Spleen (tissue), 13 donors: ENCODE measurements at regions of chr13 and their contacts with region 1.

Region 1: GRCh38 chr13:29771247-29771646 is 79.2 kb downstream of the UBL3 start:
- DNase-seq: no peak
- H3K4me3 ChIP-seq: no peak overlapping the region
- H3K27ac ChIP-seq: no peak overlapping the region
- H3K4me1 ChIP-seq: peaks cover 0 to 17% (median 0%) of the 10 kb centered on the region in 6 donors
- H3K27me3 ChIP-seq: no peaks in the 10 kb centered on the region
- CTCF ChIP-seq: peak in 10 of 11 experiments; percentile 26 to 68 (median 57)
- POLR2A ChIP-seq: no peak

Region 2: DNA sequence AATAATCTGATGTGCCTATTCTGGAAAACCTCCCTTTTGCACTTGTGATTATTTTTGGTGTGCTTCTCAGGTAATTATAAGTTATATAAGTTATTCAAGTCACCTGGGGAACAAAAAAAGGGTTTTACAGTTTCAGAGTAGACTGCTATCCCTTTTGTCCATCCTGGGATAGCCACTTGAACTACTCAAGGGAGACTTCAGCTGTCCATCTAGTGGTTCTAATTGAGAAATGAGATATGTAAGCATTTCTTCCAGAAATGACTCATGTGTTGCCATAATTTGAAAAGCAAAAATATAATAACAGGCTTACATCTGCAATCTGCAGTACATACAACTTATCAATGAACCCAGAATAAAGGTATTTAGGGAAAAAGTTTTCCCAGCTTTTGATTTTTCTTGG is 58.8 kb after region 1 on chr13:
- intact Hi-C with region 1: no loop called
- DNase-seq: no peak
- H3K4me3 ChIP-seq: no peak overlapping the region
- H3K27ac ChIP-seq: no peak overlapping the region
- H3K4me1 ChIP-seq: peaks cover 0 to 10% (median 2%) of the 10 kb centered on the region in 6 donors
- H3K27me3 ChIP-seq: no peaks in the 10 kb centered on the region
- CTCF ChIP-seq: no peak
- POLR2A ChIP-seq: no peak

Region 3: DNA sequence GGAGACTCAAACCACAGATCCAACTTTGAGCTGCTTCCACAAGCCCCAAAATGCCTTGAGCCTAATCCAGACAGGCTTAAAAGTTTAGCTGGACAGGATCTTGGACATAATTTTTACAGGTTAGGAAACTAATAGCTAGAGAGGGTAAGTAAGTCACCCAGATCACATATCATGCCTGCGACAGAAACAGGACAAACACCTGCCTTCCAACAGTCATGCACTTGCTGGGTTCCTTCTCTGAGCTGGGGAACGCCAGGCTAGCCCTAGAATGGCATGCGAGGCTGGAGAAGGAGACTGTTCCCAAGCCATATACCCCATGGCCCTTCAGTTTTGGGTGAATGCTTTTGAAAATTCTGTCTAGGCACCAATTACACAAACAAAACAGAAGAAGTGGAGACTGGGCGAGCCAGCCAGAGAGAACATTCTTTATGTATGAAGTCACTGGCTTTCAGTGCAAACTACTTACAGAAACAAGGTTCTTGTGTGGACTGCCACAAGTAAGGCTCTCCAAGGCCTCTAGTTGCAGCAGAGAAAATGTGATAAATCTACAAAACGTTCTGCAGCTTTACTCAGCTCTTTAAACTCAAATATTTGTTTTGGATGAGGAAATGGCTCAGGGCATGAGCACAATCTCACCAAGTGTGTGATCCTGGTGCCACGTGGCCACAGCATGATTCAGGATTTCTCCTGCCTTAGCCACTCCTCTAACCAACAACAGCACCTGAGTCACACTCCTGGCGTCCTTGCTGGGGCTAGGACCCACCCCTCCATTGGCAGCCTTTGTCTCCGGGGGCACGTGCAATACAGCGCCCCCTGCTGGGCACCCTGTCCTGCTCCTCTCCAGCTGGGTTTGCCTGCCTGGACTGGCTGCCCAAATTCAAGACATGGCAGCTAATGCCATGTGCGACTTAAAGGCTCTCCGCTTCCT is 152.6 kb after region 1 on chr13:
- intact Hi-C with region 1: loop called (anchors 10 kb)
- DNase-seq: peak; percentile 84
- H3K4me3 ChIP-seq: no peak overlapping the region
- H3K27ac ChIP-seq: peak overlapping the region in 4 of 8 donors; percentile 10 to 39 (median 36)
- H3K4me1 ChIP-seq: peaks cover 0 to 18% (median 13%) of the 10 kb centered on the region in 6 donors
- H3K27me3 ChIP-seq: no peaks in the 10 kb centered on the region
- CTCF ChIP-seq: peak; percentile 37 to 87 (median 73)
- POLR2A ChIP-seq: no peak

Region 4: GRCh38 chr13:30114571-30115256 is 343.5 kb after region 1 on chr13:
- intact Hi-C with region 1: loop called (anchors 5 kb)
- DNase-seq: peak; percentile 98
- H3K4me3 ChIP-seq: peak overlapping the region; percentile 42 to 83 (median 69)
- H3K27ac ChIP-seq: peak overlapping the region in 4 of 8 donors; percentile 35 to 69 (median 59)
- H3K4me1 ChIP-seq: peaks cover 0 to 43% (median 28%) of the 10 kb centered on the region in 6 donors
- H3K27me3 ChIP-seq: peaks cover 0 to 16% (median 0%) of the 10 kb centered on the region in 7 donors
- CTCF ChIP-seq: peak; percentile 79 to 94 (median 91)
- POLR2A ChIP-seq: no peak

Region 5: DNA sequence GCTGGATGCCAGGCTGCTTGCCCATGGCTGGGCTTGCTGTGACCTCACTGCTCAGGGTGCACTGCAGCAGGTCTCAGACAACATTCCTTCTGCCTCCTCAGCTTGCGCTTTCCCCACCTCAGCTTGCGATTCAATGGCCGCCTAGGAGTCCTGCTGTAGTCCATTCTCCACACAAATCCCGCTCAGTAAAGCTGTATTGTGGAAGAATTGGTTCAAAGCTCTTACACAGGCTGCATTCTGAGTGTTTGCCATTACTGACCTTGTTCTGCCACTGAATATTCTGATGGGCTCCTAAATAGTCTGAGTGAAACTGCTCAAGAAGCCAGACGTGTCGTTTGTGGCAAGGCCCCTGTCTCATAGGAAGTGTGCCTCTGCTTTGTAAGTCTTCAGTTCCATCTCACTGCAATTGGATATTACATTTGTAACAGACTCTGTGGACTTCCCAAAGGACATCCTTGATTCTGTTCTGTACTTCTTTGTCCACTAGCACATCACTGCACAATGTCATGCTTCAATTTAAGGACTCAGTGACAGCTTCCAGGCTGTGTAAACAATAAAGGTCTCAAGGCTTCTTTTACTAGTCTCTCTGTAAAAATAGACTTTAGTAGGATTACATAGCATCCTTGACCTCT is 486.3 kb after region 1 on chr13:
- intact Hi-C with region 1: no loop called
- DNase-seq: no peak
- H3K4me3 ChIP-seq: no peak overlapping the region
- H3K27ac ChIP-seq: no peak overlapping the region
- H3K4me1 ChIP-seq: peaks cover 0 to 10% (median 0%) of the 10 kb centered on the region in 6 donors
- H3K27me3 ChIP-seq: no peaks in the 10 kb centered on the region
- CTCF ChIP-seq: no peak
- POLR2A ChIP-seq: no peak

Region 6: GRCh38 chr13:30529085-30529834 is 758.0 kb after region 1 on chr13:
- intact Hi-C with region 1: no loop called
- DNase-seq: no peak
- H3K4me3 ChIP-seq: no peak overlapping the region
- H3K27ac ChIP-seq: no peak overlapping the region
- H3K4me1 ChIP-seq: no peaks in the 10 kb centered on the region
- H3K27me3 ChIP-seq: no peaks in the 10 kb centered on the region
- CTCF ChIP-seq: no peak
- POLR2A ChIP-seq: no peak

Region 7: GRCh38 chr13:30679483-30680330 is 908.5 kb after region 1 on chr13:
- intact Hi-C with region 1: no loop called
- DNase-seq: no peak
- H3K4me3 ChIP-seq: no peak overlapping the region
- H3K27ac ChIP-seq: peak overlapping the region in 1 of 8 donors; percentile 12
- H3K4me1 ChIP-seq: peaks cover 0 to 32% (median 10%) of the 10 kb centered on the region in 6 donors
- H3K27me3 ChIP-seq: no peaks in the 10 kb centered on the region
- CTCF ChIP-seq: peak; percentile 49 to 77 (median 62)
- POLR2A ChIP-seq: no peak